Heart right ventricle (tissue), 16 donors: ENCODE measurements at regions of chr11 and their contacts with region 1.

Region 1: GRCh38 chr11:83819933-83820549 is 533.9 kb upstream of the CCDC90B start:
- DNase-seq: peak in 1 of 2 donors; percentile 12
- ATAC-seq: peak in 2 of 8 donors; percentile 56 to 72
- H3K4me3 ChIP-seq: no peak overlapping the region
- H3K27ac ChIP-seq: no peak overlapping the region
- H3K4me1 ChIP-seq: peaks cover 0 to 7% (median 0%) of the 10 kb centered on the region in 9 donors
- H3K27me3 ChIP-seq: no peaks in the 10 kb centered on the region
- CTCF ChIP-seq: peak; percentile 23 to 75 (median 66)

Region 2: GRCh38 chr11:82682003-82682751 is 1137.9 kb before region 1 on chr11:
- intact Hi-C with region 1: loop called in 1 of 10 experiments (anchors 10 kb)
- DNase-seq: peak in 1 of 2 donors; percentile 35
- ATAC-seq: peak; percentile 42 to 85 (median 74)
- H3K4me3 ChIP-seq: no peak overlapping the region
- H3K27ac ChIP-seq: no peak overlapping the region
- H3K4me1 ChIP-seq: no peaks in the 10 kb centered on the region
- H3K27me3 ChIP-seq: peaks cover 0 to 25% (median 9%) of the 10 kb centered on the region in 7 donors
- CTCF ChIP-seq: peak; percentile 32 to 74 (median 60)

Region 3: DNA sequence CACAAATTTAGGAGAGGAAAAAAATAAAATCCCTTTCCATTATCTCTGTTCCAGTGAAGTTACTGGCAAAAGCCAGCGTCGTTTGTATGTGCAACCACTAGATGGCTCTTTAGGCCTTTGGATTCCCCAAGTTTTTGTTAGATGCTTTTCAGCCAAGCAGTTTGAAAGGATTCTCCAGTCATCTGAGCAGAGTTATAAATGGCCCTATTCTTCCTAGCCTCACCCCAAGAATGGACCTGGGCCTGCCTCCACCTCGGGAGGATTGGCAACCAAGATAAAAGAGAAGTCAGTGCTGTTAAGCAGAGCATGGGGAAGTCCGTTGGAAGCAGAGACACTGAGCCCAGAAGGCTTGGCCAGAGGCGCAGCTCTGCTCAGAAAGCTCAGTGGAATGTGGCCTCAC is 1101.7 kb before region 1 on chr11:
- intact Hi-C with region 1: loop called in 2 of 10 experiments (anchors 5 to 10 kb)
- DNase-seq: peak in 1 of 2 donors; percentile 16
- ATAC-seq: peak in 7 of 8 donors; percentile 36 to 78 (median 72)
- H3K4me3 ChIP-seq: no peak overlapping the region
- H3K27ac ChIP-seq: no peak overlapping the region
- H3K4me1 ChIP-seq: peaks cover 0 to 25% (median 6%) of the 10 kb centered on the region in 9 donors
- H3K27me3 ChIP-seq: peaks cover 0 to 12% (median 5%) of the 10 kb centered on the region in 7 donors
- CTCF ChIP-seq: peak; percentile 14 to 86 (median 69)

Region 4: DNA sequence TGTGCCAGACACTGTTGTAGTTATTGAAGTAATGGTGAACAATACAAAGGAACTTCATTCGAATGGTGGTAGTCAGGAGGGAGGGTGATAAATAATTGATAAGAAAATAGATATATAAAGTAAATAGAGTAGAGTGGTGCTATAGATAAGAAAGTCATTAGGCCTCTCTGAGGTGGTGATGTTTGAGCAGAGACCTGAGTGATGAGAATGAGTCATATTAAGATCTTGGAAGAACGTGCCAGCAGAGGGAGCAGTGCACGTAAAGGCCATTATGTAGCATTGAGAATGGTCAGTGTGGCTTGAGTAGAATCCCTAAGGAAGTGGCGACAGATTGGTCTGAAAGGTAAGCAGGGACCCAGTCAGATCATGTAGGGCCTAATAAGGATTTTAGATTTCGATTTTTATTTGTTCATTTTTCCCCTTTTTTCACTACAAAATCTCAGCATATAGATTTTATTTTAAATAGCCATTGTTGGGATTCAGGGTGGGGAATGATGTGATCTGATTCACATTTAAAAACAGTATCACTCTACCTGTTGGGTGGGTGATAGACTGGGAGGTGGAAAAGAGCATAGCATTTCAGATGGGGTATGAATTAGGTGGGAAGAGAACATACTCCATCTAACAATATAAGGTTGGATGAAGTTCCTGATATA is 578.6 kb before region 1 on chr11:
- intact Hi-C with region 1: loop called in 2 of 10 experiments (anchors 5 to 10 kb)
- DNase-seq: peak in 1 of 2 donors; percentile 19
- ATAC-seq: peak in 4 of 8 donors; percentile 62 to 85 (median 74)
- H3K4me3 ChIP-seq: no peak overlapping the region
- H3K27ac ChIP-seq: no peak overlapping the region
- H3K4me1 ChIP-seq: peaks cover 0 to 3% (median 0%) of the 10 kb centered on the region in 9 donors
- H3K27me3 ChIP-seq: no peaks in the 10 kb centered on the region
- CTCF ChIP-seq: peak in 8 of 9 donors; percentile 16 to 65 (median 58)

Region 5: GRCh38 chr11:83292709-83293456 is 527.2 kb before region 1 on chr11:
- intact Hi-C with region 1: loop called in 9 of 10 experiments (anchors 1 to 10 kb)
- DNase-seq: peak in 1 of 2 donors; percentile 33
- ATAC-seq: peak in 6 of 8 donors; percentile 51 to 77 (median 58)
- H3K4me3 ChIP-seq: peak overlapping the region in 1 of 10 donors; percentile 20
- H3K27ac ChIP-seq: no peak overlapping the region
- H3K4me1 ChIP-seq: peaks cover 0 to 3% (median 0%) of the 10 kb centered on the region in 9 donors
- H3K27me3 ChIP-seq: no peaks in the 10 kb centered on the region
- CTCF ChIP-seq: peak; percentile 35 to 75 (median 68)

Region 6: GRCh38 chr11:83299681-83300080 is 520.4 kb before region 1 on chr11:
- intact Hi-C with region 1: loop called in 6 of 10 experiments (anchors 2 to 10 kb)
- DNase-seq: no peak
- ATAC-seq: no peak
- H3K4me3 ChIP-seq: no peak overlapping the region
- H3K27ac ChIP-seq: no peak overlapping the region
- H3K4me1 ChIP-seq: no peaks in the 10 kb centered on the region
- H3K27me3 ChIP-seq: no peaks in the 10 kb centered on the region
- CTCF ChIP-seq: no peak

Region 7: DNA sequence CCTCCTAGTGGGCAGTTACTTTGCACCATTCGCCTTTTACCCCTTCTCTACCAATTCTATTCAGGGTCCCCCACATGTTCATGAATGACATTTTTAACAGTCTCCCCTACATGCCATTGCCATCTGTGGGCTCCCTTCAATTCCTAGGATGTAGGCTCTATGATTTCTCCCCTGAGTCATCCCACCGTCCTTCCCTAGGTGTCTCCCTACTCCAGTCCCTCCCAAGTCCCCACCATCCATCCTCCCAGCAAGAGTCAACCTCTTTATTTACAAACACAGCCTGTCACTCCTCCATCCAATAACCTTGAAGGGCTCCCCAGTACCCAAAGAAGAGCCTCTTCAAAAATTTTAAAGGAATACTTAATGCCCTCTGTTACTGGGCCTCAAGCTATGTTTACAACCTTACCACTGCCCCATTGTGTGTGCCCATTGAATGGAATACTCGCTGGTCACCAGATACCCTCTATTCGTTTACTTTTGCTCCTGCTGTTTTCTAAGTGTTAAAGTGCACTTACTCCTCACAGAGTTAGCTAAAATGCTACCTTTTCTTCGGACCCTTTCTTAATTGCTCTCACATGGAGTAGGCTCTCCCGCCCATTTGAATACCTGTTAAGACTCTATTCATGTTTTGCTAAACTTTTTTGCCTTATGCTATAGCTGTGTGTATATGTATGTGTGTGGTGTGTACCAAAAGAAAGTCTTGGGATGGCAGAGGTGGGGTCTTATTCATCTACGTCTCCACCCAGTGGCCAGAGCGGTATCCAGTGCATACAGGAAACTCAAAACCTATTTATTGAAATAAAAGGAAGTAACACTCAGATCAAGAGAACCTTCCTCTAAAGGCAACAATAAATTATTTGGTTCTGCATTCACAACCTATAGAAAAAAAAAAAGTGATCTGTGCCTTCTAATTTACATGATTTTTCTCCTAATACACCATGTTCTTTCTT is 298.1 kb before region 1 on chr11:
- intact Hi-C with region 1: loop called in 1 of 10 experiments (anchors 10 kb)
- DNase-seq: no peak
- ATAC-seq: no peak
- H3K4me3 ChIP-seq: no peak overlapping the region
- H3K27ac ChIP-seq: no peak overlapping the region
- H3K4me1 ChIP-seq: no peaks in the 10 kb centered on the region
- H3K27me3 ChIP-seq: no peaks in the 10 kb centered on the region
- CTCF ChIP-seq: peak in 3 of 9 donors; percentile 10 to 12 (median 10)

Region 8: GRCh38 chr11:83862691-83863090 is 42.6 kb after region 1 on chr11:
- intact Hi-C with region 1: no loop called
- DNase-seq: peak in 1 of 2 donors; percentile 57
- ATAC-seq: peak; percentile 78 to 93 (median 84)
- H3K4me3 ChIP-seq: no peak overlapping the region
- H3K27ac ChIP-seq: no peak overlapping the region
- H3K4me1 ChIP-seq: peaks cover 0 to 6% (median 0%) of the 10 kb centered on the region in 9 donors
- H3K27me3 ChIP-seq: no peaks in the 10 kb centered on the region
- CTCF ChIP-seq: no peak